ENCODE measurements at regions of chr1 and their contacts with region 1.

Region 1: DNA sequence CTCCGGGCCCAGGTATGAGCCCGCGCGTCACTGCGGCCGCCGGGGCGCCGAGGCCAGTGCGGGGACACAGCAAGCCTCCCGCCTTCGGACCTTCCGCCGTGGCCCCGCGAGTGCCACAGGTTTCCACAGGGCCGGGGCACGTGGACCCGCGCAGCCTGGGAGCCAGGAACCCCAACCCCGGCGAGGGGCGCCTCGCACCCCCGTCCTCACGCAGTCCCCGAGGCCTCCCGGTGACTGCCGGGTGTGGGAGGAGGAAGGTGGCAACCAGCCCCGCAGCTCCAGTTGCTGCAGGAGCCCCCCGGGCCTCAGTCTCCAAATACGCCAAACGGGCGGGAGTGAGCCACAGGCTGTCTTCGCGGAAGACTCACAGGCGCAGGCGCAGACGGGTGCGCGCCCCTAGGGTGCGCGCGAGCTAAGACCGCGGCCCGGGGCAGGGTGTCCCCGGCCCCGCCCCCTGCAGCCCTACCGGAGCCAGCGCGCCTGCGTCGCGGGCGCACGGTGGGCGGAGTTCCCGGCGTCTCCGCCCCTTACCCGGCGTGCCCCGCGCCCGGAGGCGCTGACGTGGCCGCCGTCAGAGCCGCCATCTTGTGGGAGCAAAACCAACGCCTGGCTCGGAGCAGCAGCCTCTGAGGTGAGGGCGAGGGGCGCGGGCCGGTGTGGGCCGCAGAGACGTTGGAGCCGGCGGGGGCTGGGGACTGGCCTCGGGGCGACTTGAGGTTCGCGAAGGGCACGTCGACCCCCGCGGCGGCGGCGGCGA is at the start of gene ARF1:
- DNase-seq: peak; percentile 83 to 98 (median 93)
- ATAC-seq: peak; percentile 93
- H3K4me3 ChIP-seq: peak within 1 kb of the TSS; percentile 94 to 95
- H3K4me3 Mint-ChIP-seq: peak within 1 kb of the TSS; percentile 96
- H3K27ac ChIP-seq: peak within 1 kb of the TSS; percentile 96 to 97
- H3K27ac Mint-ChIP-seq: peak within 1 kb of the TSS; percentile 97
- H3K4me1 ChIP-seq: peaks cover 50% of the 10 kb centered on the region
- H3K4me1 Mint-ChIP-seq: peaks cover 51% of the 10 kb centered on the region
- H3K27me3 ChIP-seq: no peaks in the 10 kb centered on the region
- H3K27me3 Mint-ChIP-seq: no peaks in the 10 kb centered on the region
- CTCF ChIP-seq: no peak
- total RNA-seq, gene ARF1: 375 to 381 TPM

Region 2: DNA sequence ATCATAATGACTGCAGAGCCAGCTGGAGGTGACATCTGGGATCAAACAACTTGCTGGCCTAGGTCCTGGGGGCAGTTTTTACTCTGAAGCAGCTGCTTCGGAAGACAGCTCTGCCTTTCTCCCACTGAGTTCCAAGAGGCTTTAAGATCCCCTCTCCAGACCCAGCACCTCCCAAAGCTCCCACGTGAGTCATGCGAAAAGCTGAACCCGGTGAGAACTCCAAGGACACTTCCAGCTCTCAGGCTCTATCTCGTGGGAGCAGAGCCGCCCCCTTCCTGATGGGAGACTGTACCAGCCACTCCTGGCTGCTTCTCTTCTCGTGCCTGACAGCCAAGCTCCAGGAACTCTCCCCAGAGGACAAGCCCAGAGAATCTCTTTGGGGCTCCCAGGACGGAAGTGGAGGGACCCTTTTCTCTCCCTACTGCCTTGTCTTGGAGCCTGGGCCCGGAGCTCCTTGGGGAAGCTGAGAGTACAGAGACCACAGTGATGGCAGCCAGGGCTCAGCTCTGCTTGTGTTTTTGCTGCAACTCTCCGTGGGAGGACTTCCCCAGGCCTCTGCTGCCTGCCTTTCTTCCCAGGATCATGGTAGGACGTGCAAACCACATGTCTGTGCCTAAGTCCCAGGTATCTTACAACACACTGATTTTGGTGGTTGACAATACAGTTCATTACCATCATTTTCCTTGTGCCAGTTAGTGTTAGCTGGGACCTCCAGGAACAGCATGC is 1493.1 kb before region 1 on chr1:
- CTCF ChIA-PET with region 1: no interaction called
- POLR2A ChIA-PET with region 1: no interaction called
- intact Hi-C with region 1: no loop called
- DNase-seq: no peak
- ATAC-seq: no peak
- H3K4me3 ChIP-seq: no peak overlapping the region
- H3K4me3 Mint-ChIP-seq: no peak overlapping the region
- H3K27ac ChIP-seq: no peak overlapping the region
- H3K27ac Mint-ChIP-seq: no peak overlapping the region
- H3K4me1 ChIP-seq: no peaks in the 10 kb centered on the region
- H3K4me1 Mint-ChIP-seq: no peaks in the 10 kb centered on the region
- H3K27me3 ChIP-seq: no peaks in the 10 kb centered on the region
- H3K27me3 Mint-ChIP-seq: peaks cover 8% of the 10 kb centered on the region
- CTCF ChIP-seq: no peak

Region 3: GRCh38 chr1:227762233-227762911 is 319.9 kb before region 1 on chr1:
- CTCF ChIA-PET with region 1: no interaction called
- POLR2A ChIA-PET with region 1: interaction called, 3 read pairs
- intact Hi-C with region 1: loop called (anchors 2 to 10 kb)
- DNase-seq: peak; percentile 77 to 93 (median 90)
- ATAC-seq: peak; percentile 61
- H3K4me3 ChIP-seq: no peak overlapping the region
- H3K4me3 Mint-ChIP-seq: peak overlapping the region; percentile 64
- H3K27ac ChIP-seq: peak overlapping the region in 1 of 2 experiments; percentile 49
- H3K27ac Mint-ChIP-seq: peak overlapping the region; percentile 90
- H3K4me1 ChIP-seq: peaks cover 66% of the 10 kb centered on the region
- H3K4me1 Mint-ChIP-seq: peaks cover 74% of the 10 kb centered on the region
- H3K27me3 ChIP-seq: no peaks in the 10 kb centered on the region
- H3K27me3 Mint-ChIP-seq: no peaks in the 10 kb centered on the region
- CTCF ChIP-seq: peak; percentile 91

Region 4: DNA sequence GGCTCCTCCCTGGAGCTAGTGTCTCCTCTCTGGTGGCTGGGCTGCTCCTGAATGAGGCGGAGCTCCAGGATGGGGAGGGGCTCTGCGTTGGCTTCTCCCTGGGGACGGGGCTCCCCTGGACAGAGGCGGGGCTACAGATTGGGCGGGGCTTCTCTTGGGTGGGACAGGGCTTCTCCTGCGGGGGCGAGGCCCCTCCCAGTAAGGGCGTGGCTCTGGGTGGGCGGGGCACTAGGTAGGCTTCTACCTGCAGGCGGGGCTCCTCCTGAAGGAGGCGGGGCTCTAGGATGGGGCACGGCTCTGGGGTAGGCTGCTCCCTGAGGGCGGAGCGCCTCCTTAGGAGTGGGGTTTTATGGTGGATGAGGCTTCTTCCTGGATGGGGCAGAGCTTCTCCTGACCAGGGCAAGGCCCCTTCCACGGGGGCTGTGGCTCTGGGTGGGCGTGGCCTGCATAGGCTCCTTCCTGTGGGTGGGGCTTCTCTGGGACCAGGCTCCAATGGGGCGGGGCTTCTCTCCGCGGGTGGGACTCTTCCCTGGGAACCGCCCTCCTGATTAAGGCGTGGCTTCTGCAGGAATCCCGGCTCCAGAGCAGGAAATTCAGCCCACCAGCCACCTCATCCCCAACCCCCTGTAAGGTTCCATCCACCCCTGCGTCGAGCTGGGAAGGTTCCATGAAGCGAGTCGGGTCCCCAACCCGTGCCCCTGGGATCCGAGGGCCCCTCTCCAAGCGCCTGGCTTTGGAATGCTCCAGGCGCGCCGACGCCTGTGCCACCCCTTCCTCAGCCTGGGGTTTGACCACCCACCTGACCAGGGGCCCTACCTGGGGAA is 22.5 kb before region 1 on chr1:
- CTCF ChIA-PET with region 1: no interaction called
- POLR2A ChIA-PET with region 1: no interaction called
- intact Hi-C with region 1: loop called (anchors 1 kb)
- DNase-seq: peak; percentile 36 to 77 (median 69)
- ATAC-seq: peak; percentile 52
- H3K4me3 ChIP-seq: peak overlapping the region; percentile 34 to 51
- H3K4me3 Mint-ChIP-seq: peak overlapping the region; percentile 61
- H3K27ac ChIP-seq: no peak overlapping the region
- H3K27ac Mint-ChIP-seq: no peak overlapping the region
- H3K4me1 ChIP-seq: peaks cover 27% of the 10 kb centered on the region
- H3K4me1 Mint-ChIP-seq: peaks cover 9% of the 10 kb centered on the region
- H3K27me3 ChIP-seq: peaks cover 36 to 47% of the 10 kb centered on the region in 2 experiments
- H3K27me3 Mint-ChIP-seq: peaks cover 24% of the 10 kb centered on the region
- CTCF ChIP-seq: no peak

Region 5: GRCh38 chr1:228139944-228140656 is 57.8 kb after region 1 on chr1 and contains the start of gene GUK1:
- CTCF ChIA-PET with region 1: no interaction called
- POLR2A ChIA-PET with region 1: interaction called, 5 read pairs
- intact Hi-C with region 1: loop called (anchors 1 kb)
- DNase-seq: peak; percentile 100
- ATAC-seq: peak; percentile 88
- H3K4me3 ChIP-seq: peak within 1 kb of the TSS; percentile 91 to 99
- H3K4me3 Mint-ChIP-seq: peak within 1 kb of the TSS; percentile 94
- H3K27ac ChIP-seq: peak within 1 kb of the TSS; percentile 97 to 99
- H3K27ac Mint-ChIP-seq: peak within 1 kb of the TSS; percentile 99
- H3K4me1 ChIP-seq: peaks cover 47% of the 10 kb centered on the region
- H3K4me1 Mint-ChIP-seq: peaks cover 63% of the 10 kb centered on the region
- H3K27me3 ChIP-seq: no peaks in the 10 kb centered on the region
- H3K27me3 Mint-ChIP-seq: no peaks in the 10 kb centered on the region
- CTCF ChIP-seq: no peak
- total RNA-seq, gene GUK1: 548 to 551 TPM

Region 6: DNA sequence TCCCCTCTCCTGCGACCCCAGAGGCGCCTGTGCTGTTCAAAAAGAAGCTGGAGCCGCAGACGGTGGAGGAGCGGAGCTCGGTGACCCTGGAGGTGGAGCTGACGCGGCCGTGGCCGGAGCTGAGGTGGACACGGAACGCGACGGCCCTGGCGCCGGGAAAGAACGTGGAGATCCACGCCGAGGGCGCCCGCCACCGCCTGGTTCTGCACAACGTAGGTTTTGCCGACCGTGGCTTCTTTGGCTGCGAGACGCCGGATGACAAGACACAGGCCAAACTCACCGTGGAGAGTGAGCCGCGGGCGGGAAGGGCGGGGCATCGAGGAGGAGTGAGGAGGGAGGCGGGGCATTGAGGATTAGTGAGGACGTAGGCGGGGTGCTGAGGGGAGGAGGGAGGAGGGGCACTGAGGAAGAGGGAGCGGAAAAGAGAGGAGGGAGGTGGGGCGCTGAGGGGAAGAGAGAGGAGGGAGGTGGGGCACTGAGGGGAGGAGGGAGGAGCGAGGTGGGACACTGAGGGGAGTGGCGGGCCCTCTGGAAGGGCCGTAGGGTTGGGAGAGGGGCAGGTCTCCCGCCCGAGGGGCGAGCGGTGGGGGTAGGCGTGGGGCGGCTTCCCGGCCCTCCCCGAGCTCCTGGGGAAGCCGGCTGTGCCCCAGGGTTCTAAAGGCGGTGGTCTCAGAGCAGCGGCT is 193.6 kb after region 1 on chr1:
- CTCF ChIA-PET with region 1: no interaction called
- POLR2A ChIA-PET with region 1: no interaction called
- intact Hi-C with region 1: loop called in 1 of 2 experiments (anchors 1 kb)
- DNase-seq: peak; percentile 74 to 95 (median 92)
- ATAC-seq: peak; percentile 96
- H3K4me3 ChIP-seq: peak overlapping the region; percentile 75 to 81
- H3K4me3 Mint-ChIP-seq: peak overlapping the region; percentile 80
- H3K27ac ChIP-seq: peak overlapping the region; percentile 31 to 39
- H3K27ac Mint-ChIP-seq: peak overlapping the region; percentile 18
- H3K4me1 ChIP-seq: peaks cover 6% of the 10 kb centered on the region
- H3K4me1 Mint-ChIP-seq: peaks cover 12% of the 10 kb centered on the region
- H3K27me3 ChIP-seq: no peaks in the 10 kb centered on the region
- H3K27me3 Mint-ChIP-seq: no peaks in the 10 kb centered on the region
- CTCF ChIP-seq: no peak

Measured in CD8-positive, alpha-beta T cell (primary cell).